ENCODE measurements at regions of chr20 and their contacts with region 1.

Region 1: GRCh38 chr20:51984931-51985415 is 182.7 kb upstream of the SALL4 start:
- DNase-seq: no peak
- ATAC-seq: peak; percentile 64 to 77
- H3K4me3 ChIP-seq: no peak overlapping the region
- H3K27ac ChIP-seq: peak overlapping the region in 1 of 4 donors; percentile 18
- H3K4me1 ChIP-seq: peaks cover 0 to 3% of the 10 kb centered on the region in 2 donors
- H3K27me3 ChIP-seq: no peaks in the 10 kb centered on the region
- CTCF ChIP-seq: no peak
- POLR2A ChIP-seq: no peak

Region 2: GRCh38 chr20:51884561-51884960 is 100.4 kb before region 1 on chr20:
- in situ Hi-C with region 1: loop called in 1 of 4 experiments (anchors 25 kb)
- intact Hi-C with region 1: no loop called
- DNase-seq: no peak
- ATAC-seq: no peak
- H3K4me3 ChIP-seq: no peak overlapping the region
- H3K27ac ChIP-seq: no peak overlapping the region
- H3K4me1 ChIP-seq: no peaks in the 10 kb centered on the region
- H3K27me3 ChIP-seq: no peaks in the 10 kb centered on the region
- CTCF ChIP-seq: no peak
- POLR2A ChIP-seq: no peak

Region 3: GRCh38 chr20:52256454-52256853 is 271.5 kb after region 1 on chr20:
- in situ Hi-C with region 1: no loop called
- intact Hi-C with region 1: no loop called
- DNase-seq: no peak
- ATAC-seq: no peak
- H3K4me3 ChIP-seq: no peak overlapping the region
- H3K27ac ChIP-seq: no peak overlapping the region
- H3K4me1 ChIP-seq: no peaks in the 10 kb centered on the region
- H3K27me3 ChIP-seq: no peaks in the 10 kb centered on the region
- CTCF ChIP-seq: no peak
- POLR2A ChIP-seq: no peak